PC-9 (cell line): ENCODE measurements at regions of chr14 and their contacts with region 1.

Region 1: DNA sequence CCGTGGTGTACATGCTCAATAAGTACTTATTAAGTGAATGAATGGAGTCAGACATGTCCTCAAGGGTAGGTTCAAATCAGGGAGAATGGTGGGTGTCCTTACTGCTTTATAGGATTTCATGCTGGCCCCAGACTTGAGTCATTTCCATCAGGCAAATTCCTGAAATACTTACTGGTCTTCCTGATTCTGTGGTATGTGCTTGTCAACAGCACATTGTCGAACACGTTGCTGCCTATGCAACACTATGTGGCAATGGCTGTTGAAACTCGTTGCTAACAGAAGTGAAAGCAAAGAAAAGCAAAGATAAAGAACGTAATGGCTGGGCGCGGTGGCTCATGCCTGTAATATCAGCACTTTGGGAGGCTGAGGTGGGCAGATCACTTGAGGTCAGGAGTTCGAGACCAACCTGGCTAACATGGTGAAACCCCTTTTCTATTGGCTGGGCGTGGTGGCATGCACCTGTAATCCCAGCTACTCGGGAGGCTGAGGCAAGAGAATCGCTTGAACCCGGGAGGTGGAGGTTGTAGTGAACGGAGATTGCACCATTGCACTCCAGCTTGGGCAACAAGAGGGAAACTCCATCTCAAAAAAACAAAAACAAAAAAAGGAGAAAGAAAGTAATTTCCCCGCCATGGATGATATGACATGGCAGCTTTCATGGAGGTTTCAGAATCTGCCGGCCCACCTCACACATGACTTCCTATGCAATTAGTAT is 214.9 kb downstream of the ZFP36L1 start:
- DNase-seq: peak; percentile 84 to 99
- H3K4me3 ChIP-seq: peak overlapping the region; percentile 19; the same call in 1 of the 2 replicates
- H3K27ac ChIP-seq: peak overlapping the region; percentile 93
- H3K4me1 ChIP-seq: peaks cover 54% of the 10 kb centered on the region
- H3K27me3 ChIP-seq: no peaks in the 10 kb centered on the region
- CTCF ChIP-seq: no peak

Region 2: DNA sequence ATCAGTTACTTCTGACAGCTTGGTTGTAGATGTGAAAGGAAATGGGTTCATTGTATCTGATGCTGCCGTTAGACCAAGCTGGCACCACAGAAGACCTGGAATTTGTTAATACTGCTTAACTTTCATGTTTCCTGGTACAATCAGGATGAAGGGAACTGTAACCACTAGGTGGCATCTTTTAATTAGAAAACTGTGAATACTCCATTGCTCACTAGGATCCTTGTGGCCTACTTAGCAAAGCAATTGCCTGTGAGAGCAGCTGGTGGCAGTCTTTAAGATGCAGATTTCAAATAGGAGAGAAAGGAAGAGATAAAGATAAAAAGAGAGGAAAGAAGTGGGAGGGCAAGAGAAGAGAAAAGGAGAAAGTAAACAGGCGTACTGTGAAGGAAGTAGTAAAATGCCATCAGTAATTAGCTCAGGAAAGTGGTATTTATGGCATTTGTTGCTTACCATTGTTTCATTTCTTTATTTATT is 643.9 kb before region 1 on chr14:
- CTCF ChIA-PET with region 1: no interaction called
- POLR2A ChIA-PET with region 1: no interaction called
- intact Hi-C with region 1: loop called (anchors 2 kb)
- DNase-seq: peak in 1 of 2 experiments; percentile 64
- H3K4me3 ChIP-seq: no peak overlapping the region
- H3K27ac ChIP-seq: no peak overlapping the region
- H3K4me1 ChIP-seq: 0 out of 2 replicates have a peak, but pooled peaks cover 7% of the 10 kb centered on the region
- H3K27me3 ChIP-seq: no peaks in the 10 kb centered on the region
- CTCF ChIP-seq: peak; percentile 79

Region 3: GRCh38 chr14:68248481-68249255 is 329.3 kb before region 1 on chr14:
- CTCF ChIA-PET with region 1: interaction called, 8 read pairs
- POLR2A ChIA-PET with region 1: no interaction called
- intact Hi-C with region 1: loop called (anchors 1 kb)
- DNase-seq: peak; percentile 33 to 48
- H3K4me3 ChIP-seq: no peak overlapping the region
- H3K27ac ChIP-seq: peak overlapping the region; percentile 93
- H3K4me1 ChIP-seq: peaks cover 66% of the 10 kb centered on the region
- H3K27me3 ChIP-seq: no peaks in the 10 kb centered on the region
- CTCF ChIP-seq: peak; percentile 90

Region 4: DNA sequence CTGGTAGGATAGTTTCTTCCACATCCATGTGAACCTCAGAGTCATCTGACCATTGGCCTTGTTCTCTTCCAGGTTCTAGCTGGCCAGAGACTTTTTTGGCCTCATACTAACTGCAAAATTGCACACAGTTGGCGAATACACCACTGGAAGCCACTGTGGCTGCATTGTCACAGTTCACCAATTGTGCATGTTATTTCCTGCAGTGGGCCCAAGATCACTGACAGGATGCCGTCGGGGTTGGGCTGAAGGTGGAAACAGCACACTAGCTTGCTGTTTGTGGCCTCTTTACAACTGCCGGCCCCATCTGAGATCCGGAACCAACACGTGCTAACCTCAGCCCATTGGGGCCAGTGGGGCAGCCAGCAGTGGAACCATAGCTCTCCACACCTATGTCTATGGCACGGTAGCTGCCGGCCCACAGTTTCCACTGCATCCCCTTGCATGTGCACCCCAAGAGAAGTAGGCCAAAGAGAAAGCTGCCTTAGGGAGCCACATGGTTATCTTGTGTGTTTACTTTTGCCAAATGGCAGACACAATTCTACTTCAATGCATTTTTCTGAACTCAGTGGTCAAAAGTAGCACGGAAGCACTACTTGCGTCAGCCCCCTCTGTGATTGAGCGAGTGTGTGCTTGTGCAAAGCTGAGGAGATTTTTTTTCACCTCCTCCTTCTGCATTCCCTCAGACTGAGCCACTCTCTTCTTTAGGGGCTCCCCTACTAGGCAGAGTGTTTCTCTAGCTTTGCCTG is 294.4 kb before region 1 on chr14:
- CTCF ChIA-PET with region 1: no interaction called
- POLR2A ChIA-PET with region 1: no interaction called
- intact Hi-C with region 1: no loop called
- DNase-seq: no peak
- H3K4me3 ChIP-seq: no peak overlapping the region
- H3K27ac ChIP-seq: no peak overlapping the region
- H3K4me1 ChIP-seq: peaks cover 14% of the 10 kb centered on the region
- H3K27me3 ChIP-seq: no peaks in the 10 kb centered on the region
- CTCF ChIP-seq: no peak

Region 5: DNA sequence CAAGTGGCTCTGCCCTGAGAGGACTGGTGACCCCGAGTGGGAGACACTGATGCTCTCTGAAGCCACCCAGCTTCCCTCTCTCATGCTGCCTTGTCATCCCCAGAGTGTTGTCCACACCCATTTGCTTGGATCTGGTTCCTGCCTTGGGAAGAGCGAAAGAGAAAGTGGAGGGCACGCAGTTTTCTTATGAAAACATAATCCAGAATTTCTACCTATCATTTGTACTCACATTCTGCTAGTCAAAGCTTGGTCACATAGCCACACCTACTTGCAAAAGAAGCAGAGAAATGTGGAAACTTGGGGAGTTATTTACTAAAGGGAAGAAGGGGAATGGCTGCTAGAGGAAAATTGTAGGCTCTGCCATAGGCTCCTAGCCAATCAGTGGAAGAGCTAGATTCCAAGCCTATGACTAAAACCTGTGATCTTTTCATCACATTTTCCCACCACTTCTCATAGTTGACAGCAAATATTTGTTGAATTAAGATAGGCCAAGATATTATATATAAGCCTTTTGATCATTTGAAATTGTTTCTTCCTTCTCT is 111.4 kb before region 1 on chr14:
- CTCF ChIA-PET with region 1: no interaction called
- POLR2A ChIA-PET with region 1: no interaction called
- intact Hi-C with region 1: loop called (anchors 1 kb)
- DNase-seq: peak; percentile 65 to 100
- H3K4me3 ChIP-seq: peak overlapping the region; percentile 23; the same call in 1 of the 2 replicates
- H3K27ac ChIP-seq: peak overlapping the region; percentile 96
- H3K4me1 ChIP-seq: peaks cover 95% of the 10 kb centered on the region
- H3K27me3 ChIP-seq: no peaks in the 10 kb centered on the region
- CTCF ChIP-seq: no peak

Region 6: DNA sequence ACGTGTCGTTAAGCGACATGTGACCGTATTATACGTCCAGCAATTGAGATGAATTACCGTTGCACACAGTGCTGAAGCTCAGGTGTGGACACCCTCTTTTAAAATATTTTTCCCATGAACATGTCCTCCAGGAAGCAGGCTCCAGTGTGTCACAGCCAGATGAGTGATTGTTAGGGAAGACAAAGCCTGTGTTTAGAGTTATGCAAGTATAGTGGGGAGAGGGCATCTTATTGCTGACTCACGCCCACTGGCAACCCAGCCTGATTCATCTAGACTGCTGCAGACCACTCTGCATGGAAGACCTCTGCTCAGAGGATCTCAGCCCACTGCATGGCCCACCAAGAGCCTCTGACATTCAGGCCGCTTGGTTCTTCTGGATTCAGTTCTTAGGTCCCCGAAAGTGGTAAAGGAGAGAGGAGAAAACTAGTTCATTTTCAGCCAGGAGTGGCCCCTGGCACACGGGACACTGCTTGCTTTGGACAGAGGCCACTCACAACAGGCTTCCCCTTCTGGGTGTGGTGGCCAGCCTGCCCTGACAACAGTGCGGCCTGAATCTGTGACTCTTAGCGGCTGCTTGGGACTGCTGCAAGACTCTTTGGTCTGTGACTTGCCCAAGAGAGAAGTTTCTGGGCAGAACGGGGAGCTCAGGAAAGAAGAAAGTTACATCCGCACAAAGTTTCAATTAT is 51.4 kb before region 1 on chr14:
- CTCF ChIA-PET with region 1: no interaction called
- POLR2A ChIA-PET with region 1: interaction called, 4 read pairs
- intact Hi-C with region 1: loop called (anchors 1 kb)
- DNase-seq: peak; percentile 71 to 74
- H3K4me3 ChIP-seq: no peak overlapping the region
- H3K27ac ChIP-seq: peak overlapping the region; percentile 87
- H3K4me1 ChIP-seq: peaks cover 45% of the 10 kb centered on the region
- H3K27me3 ChIP-seq: no peaks in the 10 kb centered on the region
- CTCF ChIP-seq: no peak

Region 7: GRCh38 chr14:68685419-68686204 is 107.6 kb after region 1 on chr14:
- CTCF ChIA-PET with region 1: no interaction called
- POLR2A ChIA-PET with region 1: interaction called, 3 read pairs
- intact Hi-C with region 1: loop called (anchors 1 kb)
- DNase-seq: peak; percentile 68 to 97
- H3K4me3 ChIP-seq: no peak overlapping the region
- H3K27ac ChIP-seq: peak overlapping the region; percentile 90
- H3K4me1 ChIP-seq: peaks cover 87% of the 10 kb centered on the region
- H3K27me3 ChIP-seq: no peaks in the 10 kb centered on the region
- CTCF ChIP-seq: no peak

Region 8: GRCh38 chr14:68816262-68816942 is 238.4 kb after region 1 on chr14:
- CTCF ChIA-PET with region 1: interaction called, 5 read pairs
- POLR2A ChIA-PET with region 1: interaction called, 3 read pairs
- intact Hi-C with region 1: loop called (anchors 1 kb)
- DNase-seq: peak; percentile 69 to 92
- H3K4me3 ChIP-seq: peak overlapping the region; percentile 57
- H3K27ac ChIP-seq: peak overlapping the region; percentile 81
- H3K4me1 ChIP-seq: peaks cover 50% of the 10 kb centered on the region
- H3K27me3 ChIP-seq: no peaks in the 10 kb centered on the region
- CTCF ChIP-seq: peak; percentile 98